ENCODE measurements at regions of chr2 and their contacts with region 1.

Region 1: DNA sequence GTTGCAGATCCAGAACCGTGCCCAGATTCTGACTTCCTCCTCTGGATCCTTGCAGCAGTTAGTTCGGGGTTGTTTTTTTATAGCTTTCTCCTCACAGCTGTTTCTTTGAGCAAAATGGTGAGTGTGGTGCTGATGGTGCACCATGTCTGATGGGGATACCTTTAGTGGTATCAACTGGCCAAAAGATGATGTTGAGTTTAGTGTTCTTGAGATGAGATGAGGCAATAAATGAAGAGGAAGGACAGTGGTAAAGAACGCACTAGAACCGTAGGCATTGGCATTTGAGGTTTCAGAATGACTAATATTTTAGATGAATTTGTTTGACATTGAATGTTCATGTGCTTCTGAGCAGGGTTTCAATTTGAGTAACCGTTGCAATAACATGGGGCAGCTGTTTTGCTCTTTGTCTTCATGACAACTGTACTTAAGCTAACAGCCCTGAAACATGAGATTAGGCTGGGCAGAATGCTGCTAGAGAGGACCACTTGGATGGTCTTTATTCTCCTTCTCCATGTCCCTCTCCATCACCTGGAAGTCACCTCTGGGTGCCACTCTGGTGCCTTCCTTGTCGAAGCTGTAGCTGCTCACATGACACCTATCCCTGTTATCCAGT is 3.9 kb downstream of the CTLA4 start:
- DNase-seq: peak; percentile 61
- H3K4me3 Mint-ChIP-seq: peak overlapping the region; percentile 92
- H3K27ac Mint-ChIP-seq: peak overlapping the region; percentile 98
- H3K4me1 Mint-ChIP-seq: peaks cover 74% of the 10 kb centered on the region
- H3K27me3 Mint-ChIP-seq: no peaks in the 10 kb centered on the region

Region 2: DNA sequence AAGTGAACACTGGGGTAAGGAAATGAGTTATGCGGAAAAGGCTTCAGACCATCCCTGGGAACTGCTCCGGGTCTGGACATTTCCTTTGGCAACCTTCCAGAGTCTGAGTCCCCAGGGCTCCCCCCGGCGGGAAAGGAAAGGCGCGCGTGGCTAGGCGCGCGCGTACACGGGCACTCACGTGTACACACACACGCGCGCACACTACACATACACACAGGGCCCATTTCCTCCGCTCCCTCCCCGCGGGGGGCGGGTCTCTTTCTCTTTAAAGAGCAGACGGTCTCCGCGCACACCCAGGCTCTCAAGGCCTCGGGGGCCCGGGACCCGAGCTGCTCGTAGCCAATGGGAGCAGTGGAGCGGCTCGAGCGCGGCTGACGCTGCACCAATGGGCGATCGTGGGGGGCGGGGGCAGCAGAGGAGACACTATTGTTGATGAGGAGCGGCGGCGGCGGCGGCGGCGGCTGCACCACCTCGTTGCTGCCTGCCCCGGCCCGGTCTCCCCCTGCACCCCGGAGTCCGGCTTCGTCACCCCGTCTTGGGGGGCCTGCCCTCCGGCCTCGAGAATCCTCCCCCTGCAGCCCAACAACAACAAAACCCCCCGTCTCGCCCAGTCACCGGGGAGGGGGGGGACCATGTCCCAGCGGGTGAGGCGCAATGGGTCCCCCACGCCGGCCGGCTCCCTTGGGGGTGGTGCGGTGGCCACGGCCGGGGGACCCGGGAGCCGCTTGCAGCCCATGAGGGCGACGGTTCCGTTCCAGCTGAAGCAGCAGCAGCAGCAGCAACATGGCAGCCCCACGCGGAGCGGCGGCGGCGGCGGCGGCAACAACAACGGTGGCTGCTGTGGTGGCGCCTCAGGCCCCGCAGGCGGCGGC is 1236.7 kb before region 1 on chr2 and contains the start of gene FAM117B:
- CTCF ChIA-PET with region 1: no interaction called
- POLR2A ChIA-PET with region 1: no interaction called
- intact Hi-C with region 1: loop called (anchors 10 kb)
- DNase-seq: peak; percentile 99
- H3K4me3 Mint-ChIP-seq: peak within 1 kb of the TSS; percentile 95
- H3K27ac Mint-ChIP-seq: peak within 1 kb of the TSS; percentile 94
- H3K4me1 Mint-ChIP-seq: peaks cover 43% of the 10 kb centered on the region
- H3K27me3 Mint-ChIP-seq: no peaks in the 10 kb centered on the region
- total RNA-seq, gene FAM117B: 5.8 to 5.9 TPM

Region 3: DNA sequence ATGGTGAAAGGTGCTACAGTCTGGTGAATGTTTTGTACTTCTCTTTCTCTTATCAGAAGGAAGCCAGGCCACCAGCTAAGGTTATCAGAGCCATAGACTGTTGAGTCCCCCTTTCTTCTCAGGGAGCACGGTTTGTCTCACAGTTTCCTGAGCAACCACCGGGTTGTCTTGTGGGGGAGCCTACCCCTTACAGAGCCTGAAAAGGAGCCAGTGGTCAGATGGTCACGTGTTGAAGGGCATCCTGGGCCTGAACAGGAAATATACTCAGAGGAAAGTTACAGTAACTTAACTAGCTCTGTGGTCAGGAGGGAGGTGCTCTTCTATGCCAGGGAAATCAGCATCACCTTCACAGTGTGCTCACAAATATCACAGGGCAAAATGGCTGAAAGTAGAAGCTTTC is 153.4 kb before region 1 on chr2:
- CTCF ChIA-PET with region 1: no interaction called
- POLR2A ChIA-PET with region 1: interaction called, 33 read pairs
- intact Hi-C with region 1: no loop called
- DNase-seq: peak; percentile 85
- H3K4me3 Mint-ChIP-seq: peak overlapping the region; percentile 69
- H3K27ac Mint-ChIP-seq: peak overlapping the region; percentile 94
- H3K4me1 Mint-ChIP-seq: peaks cover 96% of the 10 kb centered on the region
- H3K27me3 Mint-ChIP-seq: no peaks in the 10 kb centered on the region

Region 4: DNA sequence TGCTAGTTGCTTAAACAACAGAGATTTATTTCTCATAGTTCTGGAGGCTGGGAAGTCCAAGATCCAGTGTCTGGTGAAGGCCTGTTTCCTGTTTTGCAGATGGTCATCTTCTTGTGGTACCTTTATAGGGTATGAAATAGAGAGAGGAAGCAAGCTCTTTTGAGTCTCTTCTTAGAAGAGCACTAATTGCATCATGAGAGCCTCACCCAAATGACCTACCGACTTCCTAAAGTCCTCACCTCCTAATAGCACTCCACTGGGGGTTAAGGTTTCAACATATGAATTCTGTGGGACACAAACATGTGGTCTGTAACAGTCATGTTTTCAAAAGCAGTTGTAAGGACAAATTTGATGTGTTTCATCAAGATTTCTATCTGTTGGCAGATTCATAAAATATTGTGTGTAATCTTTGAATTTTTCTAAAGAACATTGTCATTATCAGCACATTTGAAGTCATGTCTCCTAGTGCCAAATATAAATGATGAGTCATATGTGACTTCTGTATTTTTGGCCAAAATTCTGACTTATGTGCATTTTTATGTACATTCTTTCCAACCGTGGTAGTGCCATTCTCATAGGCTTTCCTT is 119.7 kb before region 1 on chr2:
- CTCF ChIA-PET with region 1: no interaction called
- POLR2A ChIA-PET with region 1: interaction called, 16 read pairs
- intact Hi-C with region 1: no loop called
- DNase-seq: no peak
- H3K4me3 Mint-ChIP-seq: no peak overlapping the region
- H3K27ac Mint-ChIP-seq: peak overlapping the region; percentile 81
- H3K4me1 Mint-ChIP-seq: peaks cover 56% of the 10 kb centered on the region
- H3K27me3 Mint-ChIP-seq: no peaks in the 10 kb centered on the region

Region 5: GRCh38 chr2:203858176-203858575 is 13.3 kb before region 1 on chr2:
- CTCF ChIA-PET with region 1: interaction called, 66 read pairs
- POLR2A ChIA-PET with region 1: interaction called, 212 read pairs
- intact Hi-C with region 1: loop called (anchors 1 kb)
- DNase-seq: peak; percentile 66
- H3K4me3 Mint-ChIP-seq: peak overlapping the region; percentile 25
- H3K27ac Mint-ChIP-seq: peak overlapping the region; percentile 81
- H3K4me1 Mint-ChIP-seq: peaks cover 84% of the 10 kb centered on the region
- H3K27me3 Mint-ChIP-seq: no peaks in the 10 kb centered on the region

Region 6: DNA sequence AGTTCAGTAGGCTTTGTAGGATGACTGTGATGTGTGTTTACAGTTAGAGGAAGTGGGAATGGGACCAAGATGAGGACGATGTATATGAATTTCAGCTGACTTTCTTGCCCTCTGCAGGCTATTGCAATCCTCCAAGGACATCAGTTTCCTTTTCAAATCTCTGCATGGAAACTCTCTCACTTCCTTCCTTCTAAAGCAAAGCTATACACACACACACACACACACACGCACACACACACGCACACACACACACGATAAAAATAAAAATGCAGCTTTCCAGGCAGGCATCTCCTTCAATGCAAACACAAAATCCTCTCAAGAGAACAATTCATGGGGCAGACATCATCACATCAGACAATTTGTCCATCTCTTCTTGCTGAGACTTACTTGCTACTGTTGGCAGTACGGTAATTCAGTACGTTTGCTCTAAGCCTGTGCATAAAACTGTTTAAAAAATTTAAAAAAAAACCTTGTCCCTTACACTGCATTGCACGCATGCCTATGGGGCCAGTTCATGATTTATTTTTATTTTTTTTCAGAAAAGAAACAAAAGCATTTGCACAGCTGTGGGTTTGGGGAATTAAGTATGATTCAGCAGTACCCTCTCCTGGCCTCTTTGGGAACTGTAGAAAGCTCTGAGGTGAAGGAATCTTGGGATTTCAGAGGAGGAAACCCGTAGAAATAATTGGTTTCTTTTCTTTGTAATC is 37.9 kb after region 1 on chr2:
- CTCF ChIA-PET with region 1: interaction called, 26 read pairs
- POLR2A ChIA-PET with region 1: interaction called, 27 read pairs
- intact Hi-C with region 1: loop called (anchors 1 kb)
- DNase-seq: peak; percentile 42
- H3K4me3 Mint-ChIP-seq: no peak overlapping the region
- H3K27ac Mint-ChIP-seq: peak overlapping the region; percentile 59
- H3K4me1 Mint-ChIP-seq: peaks cover 33% of the 10 kb centered on the region
- H3K27me3 Mint-ChIP-seq: peaks cover 4% of the 10 kb centered on the region

Region 7: DNA sequence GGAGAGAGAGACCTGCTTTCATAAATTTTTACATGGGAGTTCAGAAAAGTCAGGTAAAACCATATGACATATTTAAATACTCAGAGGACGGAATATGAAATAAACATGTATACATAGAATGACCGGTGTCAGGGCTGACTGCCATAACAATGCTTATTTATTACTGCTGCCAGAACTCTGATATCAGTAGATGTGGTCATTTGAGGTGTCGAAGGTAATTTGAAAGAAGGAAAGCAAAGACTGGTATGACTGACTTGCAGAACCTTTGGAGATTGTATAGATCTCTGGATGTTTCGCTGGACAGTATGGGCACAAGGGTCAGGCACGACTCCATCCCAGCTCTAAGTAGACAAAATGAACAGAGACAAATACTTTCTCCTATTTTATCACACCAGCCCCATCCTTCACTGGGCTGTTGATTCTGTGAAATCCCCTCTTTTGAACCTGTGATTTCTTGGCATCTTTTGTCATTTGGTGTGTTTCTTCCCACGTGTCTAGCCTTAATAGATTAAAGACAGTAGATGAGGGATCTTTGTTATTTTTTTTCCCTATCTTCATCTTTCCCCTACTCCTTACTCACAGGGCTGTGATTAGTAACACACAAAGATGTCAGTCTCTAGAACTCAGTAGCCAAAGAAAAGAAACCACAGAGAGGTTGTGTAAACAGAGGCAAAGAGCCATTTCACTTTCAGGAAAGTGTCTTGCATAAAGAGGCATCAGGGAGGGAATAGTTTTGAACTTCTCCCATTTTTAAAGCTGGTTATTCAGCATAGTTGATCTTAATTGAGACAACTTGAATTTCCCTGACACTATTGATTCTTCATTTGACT is 126.7 kb after region 1 on chr2:
- CTCF ChIA-PET with region 1: no interaction called
- POLR2A ChIA-PET with region 1: interaction called, 3 read pairs
- intact Hi-C with region 1: loop called (anchors 5 kb)
- DNase-seq: no peak
- H3K4me3 Mint-ChIP-seq: peak overlapping the region; percentile 21
- H3K27ac Mint-ChIP-seq: peak overlapping the region; percentile 82
- H3K4me1 Mint-ChIP-seq: peaks cover 65% of the 10 kb centered on the region
- H3K27me3 Mint-ChIP-seq: no peaks in the 10 kb centered on the region